PC-9 (cell line): ENCODE measurements at regions of chr11 and their contacts with region 1.

Region 1: GRCh38 chr11:134331354-134332188 is at the start of gene GLB1L2:
- DNase-seq: peak; percentile 41 to 73
- H3K4me3 ChIP-seq: peak within 1 kb of the TSS; percentile 99
- H3K27ac ChIP-seq: no peak within 1 kb of the TSS
- H3K4me1 ChIP-seq: peaks cover 32% of the 10 kb centered on the region
- H3K27me3 ChIP-seq: 0 out of 2 replicates have a peak, but pooled peaks cover 6% of the 10 kb centered on the region
- CTCF ChIP-seq: no peak
- total RNA-seq, gene GLB1L2: 28.8 and 32.2 TPM in 2 replicates

Region 2: DNA sequence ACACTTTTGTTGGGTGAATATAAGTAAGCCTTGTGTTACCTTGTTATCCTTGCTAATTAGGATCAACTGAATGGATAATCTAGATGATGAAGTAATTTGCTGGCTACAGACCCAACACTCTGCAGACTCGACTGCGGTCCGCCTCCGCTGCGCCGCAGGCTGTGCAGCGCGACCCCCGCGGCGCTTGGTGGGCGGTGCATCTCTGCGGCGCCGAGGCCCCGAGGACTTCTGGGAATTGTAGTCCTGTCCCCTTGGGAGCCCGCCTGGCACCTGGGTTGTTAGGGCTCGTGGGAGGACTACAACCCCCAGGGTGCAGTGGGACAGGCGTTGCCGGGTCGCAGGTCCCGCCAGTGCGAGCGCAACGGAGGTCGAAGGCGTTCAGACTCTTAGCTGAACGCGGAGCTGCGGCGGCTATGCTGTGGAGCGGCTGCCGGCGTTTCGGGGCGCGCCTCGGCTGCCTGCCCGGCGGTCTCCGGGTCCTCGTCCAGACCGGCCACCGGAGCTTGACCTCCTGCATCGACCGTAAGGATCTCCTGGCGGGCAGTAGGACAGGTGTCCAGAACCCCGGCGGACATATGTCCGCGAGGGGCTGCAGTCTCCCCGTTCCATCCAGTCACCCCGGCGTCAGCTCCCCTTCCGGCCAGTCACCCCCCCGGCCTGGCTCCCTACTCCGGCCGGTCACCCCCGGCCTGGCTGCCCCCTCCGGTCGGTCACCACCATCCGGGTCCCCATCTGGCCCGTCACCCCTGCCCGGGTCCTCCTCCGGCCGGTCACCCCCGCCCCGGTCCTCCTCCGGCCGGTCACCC is 78.2 kb before region 1 on chr11 and contains the starts of genes ACAD8 and THYN1:
- CTCF ChIA-PET with region 1: no interaction called
- POLR2A ChIA-PET with region 1: no interaction called
- intact Hi-C with region 1: loop called (anchors 5 kb)
- DNase-seq: peak; percentile 92
- H3K4me3 ChIP-seq: peak within 1 kb of the TSS; percentile 73
- H3K27ac ChIP-seq: no peak within 1 kb of the TSS
- H3K4me1 ChIP-seq: peaks cover 15% of the 10 kb centered on the region
- H3K27me3 ChIP-seq: no peaks in the 10 kb centered on the region
- CTCF ChIP-seq: peak; percentile 39; the same call in 1 of the 2 replicates
- total RNA-seq, gene ACAD8: 16.1 and 17.2 TPM in 2 replicates
- total RNA-seq, gene THYN1: 29.8 and 41.2 TPM in 2 replicates